Heart left ventricle (tissue), 16 donors: ENCODE measurements at regions of chr10 and their contacts with region 1.

Region 1: GRCh38 chr10:91864099-91864498 is 45.2 kb downstream of the FGFBP3 start:
- DNase-seq: no peak
- ATAC-seq: no peak
- H3K4me3 ChIP-seq: no peak overlapping the region
- H3K27ac ChIP-seq: no peak overlapping the region
- H3K4me1 ChIP-seq: no peaks in the 10 kb centered on the region
- H3K27me3 ChIP-seq: no peaks in the 10 kb centered on the region
- CTCF ChIP-seq: no peak
- POLR2A ChIP-seq: no peak

Region 2: GRCh38 chr10:91820144-91820543 is 44.0 kb before region 1 on chr10:
- intact Hi-C with region 1: loop called in 3 of 10 experiments (anchors 5 to 10 kb)
- DNase-seq: no peak
- ATAC-seq: no peak
- H3K4me3 ChIP-seq: no peak overlapping the region
- H3K27ac ChIP-seq: no peak overlapping the region
- H3K4me1 ChIP-seq: peaks cover 0 to 25% (median 0%) of the 10 kb centered on the region in 12 donors
- H3K27me3 ChIP-seq: no peaks in the 10 kb centered on the region
- CTCF ChIP-seq: no peak
- POLR2A ChIP-seq: no peak

Region 3: GRCh38 chr10:91829268-91829667 is 34.8 kb before region 1 on chr10:
- intact Hi-C with region 1: loop called in 2 of 10 experiments (anchors 5 kb)
- DNase-seq: no peak
- ATAC-seq: no peak
- H3K4me3 ChIP-seq: no peak overlapping the region
- H3K27ac ChIP-seq: no peak overlapping the region
- H3K4me1 ChIP-seq: peaks cover 0 to under 1% (median 0%) of the 10 kb centered on the region in 12 donors
- H3K27me3 ChIP-seq: no peaks in the 10 kb centered on the region
- CTCF ChIP-seq: no peak
- POLR2A ChIP-seq: no peak